Activated B cell treated with CpG ODN at 0.5 μM for 24 hours (primary cell): ENCODE measurements at regions of chr1 and their contacts with region 1.

Region 1: DNA sequence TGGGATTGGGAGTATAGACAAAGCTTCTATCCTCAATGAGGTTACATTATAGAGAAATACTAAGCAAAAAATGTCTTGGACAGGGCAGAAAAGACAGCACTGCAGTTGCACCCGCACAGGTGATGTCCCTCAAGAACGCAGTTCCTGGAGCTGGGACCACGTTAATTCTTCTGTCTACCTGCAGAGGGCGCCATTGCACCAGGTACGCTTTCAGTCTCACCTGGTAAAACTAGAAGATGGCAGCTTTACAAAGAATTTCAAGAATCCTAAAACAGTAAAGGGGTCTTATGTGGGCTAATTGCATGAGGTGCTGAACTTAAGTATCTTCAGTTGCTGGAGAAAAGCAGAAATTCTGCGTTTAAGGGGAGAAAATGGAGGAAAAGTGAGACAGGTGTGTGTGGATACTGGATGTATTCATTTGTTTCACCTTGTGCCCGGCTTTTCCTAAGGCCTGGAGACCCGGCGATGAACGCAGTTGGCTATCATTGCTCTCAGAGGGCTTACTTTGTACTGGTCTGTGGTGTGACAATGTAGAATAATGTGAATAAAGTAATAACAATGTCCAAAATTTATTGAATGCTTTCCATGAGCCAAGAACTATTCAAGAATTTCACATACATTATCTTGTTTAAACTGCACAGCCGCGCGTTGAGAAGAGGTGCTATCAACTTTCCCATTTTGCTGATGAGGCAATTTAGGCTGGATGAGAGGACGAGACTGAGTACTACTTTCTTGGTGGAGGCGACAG is 276.3 kb upstream of the GREM2 start:
- DNase-seq: no peak
- ATAC-seq: no peak
- H3K4me3 Mint-ChIP-seq: no peak overlapping the region
- H3K27ac Mint-ChIP-seq: no peak overlapping the region
- H3K4me1 Mint-ChIP-seq: no peaks in the 10 kb centered on the region
- H3K27me3 Mint-ChIP-seq: no peaks in the 10 kb centered on the region
- CTCF ChIP-seq: no peak

Region 2: GRCh38 chr1:240946926-240947325 is 58.7 kb after region 1 on chr1:
- CTCF ChIA-PET with region 1: no interaction called
- POLR2A ChIA-PET with region 1: no interaction called
- intact Hi-C with region 1: loop called (anchors 5 kb)
- DNase-seq: no peak
- ATAC-seq: no peak
- H3K4me3 Mint-ChIP-seq: no peak overlapping the region
- H3K27ac Mint-ChIP-seq: no peak overlapping the region
- H3K4me1 Mint-ChIP-seq: no peaks in the 10 kb centered on the region
- H3K27me3 Mint-ChIP-seq: no peaks in the 10 kb centered on the region
- CTCF ChIP-seq: no peak

Region 3: GRCh38 chr1:241408170-241408569 is 520.0 kb after region 1 on chr1:
- CTCF ChIA-PET with region 1: interaction called, 6 read pairs
- POLR2A ChIA-PET with region 1: no interaction called
- intact Hi-C with region 1: loop called (anchors 2 kb)
- DNase-seq: no peak
- ATAC-seq: no peak
- H3K4me3 Mint-ChIP-seq: no peak overlapping the region
- H3K27ac Mint-ChIP-seq: no peak overlapping the region
- H3K4me1 Mint-ChIP-seq: no peaks in the 10 kb centered on the region
- H3K27me3 Mint-ChIP-seq: peaks cover 4% of the 10 kb centered on the region
- CTCF ChIP-seq: no peak

Region 4: GRCh38 chr1:241485554-241485992 is 597.4 kb after region 1 on chr1:
- CTCF ChIA-PET with region 1: interaction called, 9 read pairs
- POLR2A ChIA-PET with region 1: no interaction called
- intact Hi-C with region 1: loop called (anchors 5 kb)
- DNase-seq: no peak
- ATAC-seq: no peak
- H3K4me3 Mint-ChIP-seq: no peak overlapping the region
- H3K27ac Mint-ChIP-seq: no peak overlapping the region
- H3K4me1 Mint-ChIP-seq: peaks cover 6% of the 10 kb centered on the region
- H3K27me3 Mint-ChIP-seq: no peaks in the 10 kb centered on the region
- CTCF ChIP-seq: no peak

Region 5: GRCh38 chr1:241499910-241500309 is 611.7 kb after region 1 on chr1:
- CTCF ChIA-PET with region 1: no interaction called
- POLR2A ChIA-PET with region 1: no interaction called
- intact Hi-C with region 1: loop called (anchors 1 kb)
- DNase-seq: no peak
- ATAC-seq: no peak
- H3K4me3 Mint-ChIP-seq: no peak overlapping the region
- H3K27ac Mint-ChIP-seq: no peak overlapping the region
- H3K4me1 Mint-ChIP-seq: no peaks in the 10 kb centered on the region
- H3K27me3 Mint-ChIP-seq: no peaks in the 10 kb centered on the region
- CTCF ChIP-seq: no peak

Region 6: DNA sequence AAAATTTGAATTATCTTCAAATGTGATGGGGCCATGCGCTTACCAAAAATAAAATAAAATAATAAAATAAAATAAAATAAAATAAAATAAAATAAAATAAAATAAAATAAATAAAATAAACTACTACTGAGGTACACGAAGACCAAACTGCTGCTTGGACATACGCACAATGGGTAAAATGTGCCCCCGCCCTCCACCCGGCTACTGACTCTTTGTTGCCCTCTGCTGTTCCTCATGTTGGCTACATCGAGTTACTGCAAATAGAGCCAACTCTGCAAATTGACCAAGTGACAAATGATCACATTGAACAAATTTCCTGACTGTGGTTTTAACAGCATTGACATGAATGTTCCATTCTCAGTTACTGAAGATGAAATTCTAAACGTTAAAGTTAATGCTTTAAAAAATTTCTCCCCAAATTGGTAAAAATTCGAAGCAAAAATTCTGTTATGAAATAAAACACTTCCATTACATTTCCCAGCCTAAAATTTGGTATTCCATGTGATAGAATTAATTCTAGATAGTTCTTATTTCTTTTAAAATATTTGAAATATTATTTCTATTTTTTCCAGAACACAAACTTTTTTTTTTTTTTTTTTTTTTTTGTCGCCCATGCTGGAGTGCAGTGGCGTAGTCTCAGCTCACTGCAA is 1129.5 kb after region 1 on chr1:
- CTCF ChIA-PET with region 1: no interaction called
- POLR2A ChIA-PET with region 1: no interaction called
- intact Hi-C with region 1: loop called (anchors 5 kb)
- DNase-seq: no peak
- ATAC-seq: peak; percentile 77
- H3K4me3 Mint-ChIP-seq: no peak overlapping the region
- H3K27ac Mint-ChIP-seq: no peak overlapping the region
- H3K4me1 Mint-ChIP-seq: no peaks in the 10 kb centered on the region
- H3K27me3 Mint-ChIP-seq: no peaks in the 10 kb centered on the region
- CTCF ChIP-seq: no peak